ENCODE measurements at regions of chr1 and their contacts with region 1.

Region 1: GRCh38 chr1:28329395-28330153 is 734 bp downstream of the MED18 start:
- DNase-seq: peak in 2 of 4 experiments; percentile 27 to 70
- ATAC-seq: peak; percentile 74
- H3K4me3 ChIP-seq: peak overlapping the region; percentile 72
- H3K27ac ChIP-seq: peak overlapping the region; percentile 84
- H3K4me1 ChIP-seq: peaks cover 17 to 33% of the 10 kb centered on the region in 2 experiments
- H3K27me3 ChIP-seq: no peaks in the 10 kb centered on the region
- CTCF ChIP-seq: no peak
- EP300 ChIP-seq: no peak
- POLR2A ChIP-seq: no peak
- RAD21 ChIP-seq: peak in 1 of 2 experiments; percentile 7; a peak in 1 of 4 replicates

Region 2: GRCh38 chr1:28259307-28260167 is 70.0 kb before region 1 on chr1 and contains the start of gene SESN2:
- CTCF ChIA-PET with region 1: no interaction called
- POLR2A ChIA-PET with region 1: interaction called, 25 read pairs
- in situ Hi-C with region 1: no loop called
- intact Hi-C with region 1: loop called (anchors 5 kb)
- DNase-seq: peak; percentile 99 to 100 (median 100)
- ATAC-seq: peak; percentile 92
- H3K4me3 ChIP-seq: peak within 1 kb of the TSS; percentile 96
- H3K27ac ChIP-seq: peak within 1 kb of the TSS; percentile 90
- H3K4me1 ChIP-seq: peaks cover 52 to 64% of the 10 kb centered on the region in 2 experiments
- H3K27me3 ChIP-seq: no peaks in the 10 kb centered on the region
- CTCF ChIP-seq: no peak; a peak in 1 of 6 replicates
- EP300 ChIP-seq: no peak
- POLR2A ChIP-seq: peak; percentile 99
- RAD21 ChIP-seq: peak in 1 of 2 experiments; percentile 31; a peak in 1 of 4 replicates
- polyA plus RNA-seq, gene SESN2: 3.7 to 5.4 TPM

Region 3: DNA sequence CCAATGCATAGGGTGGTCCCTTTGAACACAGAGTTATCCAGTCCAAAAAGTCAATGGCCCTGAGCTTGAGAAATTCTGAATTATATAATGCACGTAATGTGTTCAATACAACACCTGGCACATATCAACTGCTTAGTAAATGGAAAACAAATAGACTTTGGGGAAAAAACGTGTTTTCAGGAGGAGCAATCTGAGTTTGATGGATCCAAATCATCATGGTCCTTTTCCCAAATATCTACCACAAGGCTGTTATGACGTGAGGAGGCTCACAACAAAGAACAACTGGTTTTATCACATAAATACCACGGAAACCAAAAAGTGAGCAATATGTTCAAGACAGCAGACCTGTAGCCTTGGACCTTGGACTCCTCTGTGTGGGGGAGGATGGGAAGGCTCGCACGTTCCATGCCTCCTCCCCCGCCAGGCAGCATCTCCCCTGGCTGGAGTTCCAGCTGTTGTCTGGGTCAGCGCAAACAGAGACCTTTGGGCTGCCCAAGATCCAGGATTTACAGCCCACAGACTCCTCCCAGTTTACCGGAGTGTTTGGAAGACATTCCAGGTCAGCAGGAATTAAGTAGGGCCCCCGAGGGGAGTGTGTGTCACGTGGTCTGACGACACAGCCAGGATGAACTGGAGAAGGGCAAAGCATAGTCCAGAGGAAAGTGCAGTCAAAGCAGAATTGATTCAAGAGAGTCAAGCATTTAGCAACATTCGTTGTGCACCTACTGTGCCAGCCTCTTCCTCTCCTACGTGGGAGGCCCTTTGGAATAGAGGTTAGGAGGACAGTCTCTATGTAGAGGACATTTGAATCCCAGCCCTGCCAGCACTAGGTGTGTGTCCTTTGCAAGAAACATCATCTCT is 32.9 kb before region 1 on chr1:
- CTCF ChIA-PET with region 1: no interaction called
- POLR2A ChIA-PET with region 1: interaction called, 13 read pairs
- in situ Hi-C with region 1: no loop called
- intact Hi-C with region 1: no loop called
- DNase-seq: peak; percentile 34 to 71 (median 58)
- ATAC-seq: peak; percentile 83
- H3K4me3 ChIP-seq: 0 out of 2 replicates have a peak overlapping the region, but pooled peaks have one; percentile 11
- H3K27ac ChIP-seq: no peak overlapping the region; the same call in 2 of the 3 replicates
- H3K4me1 ChIP-seq: peaks cover 11 to 17% of the 10 kb centered on the region in 2 experiments
- H3K27me3 ChIP-seq: no peaks in the 10 kb centered on the region
- CTCF ChIP-seq: no peak
- EP300 ChIP-seq: no peak
- POLR2A ChIP-seq: no peak
- RAD21 ChIP-seq: no peak

Region 4: DNA sequence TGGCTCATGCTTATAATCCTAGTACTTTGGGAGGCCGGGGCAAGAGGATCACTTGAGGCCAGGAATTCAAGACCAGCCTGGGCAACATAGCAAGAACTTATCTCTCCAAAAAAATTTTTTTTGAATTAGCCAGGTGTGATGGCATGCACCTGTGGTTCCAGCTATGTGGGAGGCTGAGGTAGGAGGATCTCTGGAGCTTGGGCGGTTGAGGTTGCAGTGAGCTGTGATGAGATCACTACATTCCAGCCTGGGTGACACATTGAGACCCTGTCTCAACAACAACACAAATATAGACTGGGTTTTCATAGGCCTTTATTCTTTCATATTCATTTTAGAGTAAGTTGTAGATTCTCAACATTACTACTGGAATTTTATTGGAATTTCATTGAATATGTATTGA is 12.0 kb after region 1 on chr1:
- CTCF ChIA-PET with region 1: no interaction called
- POLR2A ChIA-PET with region 1: interaction called, 72 read pairs
- in situ Hi-C with region 1: no loop called
- intact Hi-C with region 1: no loop called
- DNase-seq: no peak
- ATAC-seq: no peak
- H3K4me3 ChIP-seq: no peak overlapping the region
- H3K27ac ChIP-seq: no peak overlapping the region
- H3K4me1 ChIP-seq: peaks cover 0 to 7% of the 10 kb centered on the region in 2 experiments; a peak in 3 of 5 replicates
- H3K27me3 ChIP-seq: no peaks in the 10 kb centered on the region
- CTCF ChIP-seq: no peak
- EP300 ChIP-seq: no peak
- POLR2A ChIP-seq: no peak
- RAD21 ChIP-seq: no peak

Region 5: DNA sequence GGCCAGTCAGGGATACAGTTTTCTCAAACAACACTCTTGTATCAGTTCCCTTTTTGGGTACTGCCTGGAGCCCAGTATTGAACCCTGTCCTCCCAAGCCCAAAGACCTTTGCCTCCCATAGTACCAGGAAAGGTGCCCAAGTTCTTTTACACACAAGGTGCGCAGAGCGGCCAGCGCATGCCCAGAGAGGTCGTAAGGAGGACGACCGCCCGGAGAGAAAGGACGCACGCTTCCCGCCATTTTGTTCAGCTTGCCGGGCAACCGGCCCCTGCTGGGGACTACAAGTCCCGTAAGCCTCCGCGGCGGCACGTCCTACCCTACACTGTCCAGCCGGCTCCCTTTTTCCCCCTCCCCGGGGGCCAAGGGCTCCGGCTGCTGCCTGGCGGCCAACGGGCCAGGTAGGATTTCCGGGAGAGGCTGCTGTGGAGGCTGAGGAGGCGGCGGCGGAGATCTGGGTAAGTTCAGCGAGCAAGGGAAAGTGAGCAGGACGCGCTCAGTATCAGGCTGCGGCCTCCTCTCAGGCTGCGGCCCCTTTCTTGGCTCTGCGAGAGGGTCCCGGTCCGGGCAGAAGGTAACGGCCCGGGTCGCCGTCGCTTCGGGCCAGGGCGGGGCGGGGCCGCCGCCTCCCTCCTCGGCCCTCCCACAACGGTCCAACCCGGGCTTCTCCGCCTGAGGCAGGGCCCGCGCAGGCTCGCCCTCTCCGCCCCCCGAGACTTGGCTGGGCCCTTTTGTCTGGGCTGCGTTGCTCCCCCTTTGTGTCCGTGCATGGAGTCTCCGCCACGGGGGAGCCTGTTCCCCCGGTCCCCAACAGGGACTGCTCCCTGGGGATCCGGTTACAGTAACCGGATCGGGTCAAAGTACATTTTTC is 40.0 kb after region 1 on chr1 and contains the start of gene PHACTR4:
- CTCF ChIA-PET with region 1: no interaction called
- POLR2A ChIA-PET with region 1: interaction called, 17 read pairs
- in situ Hi-C with region 1: no loop called
- intact Hi-C with region 1: no loop called
- DNase-seq: peak; percentile 95 to 99 (median 97)
- ATAC-seq: peak; percentile 97
- H3K4me3 ChIP-seq: peak within 1 kb of the TSS; percentile 55
- H3K27ac ChIP-seq: peak within 1 kb of the TSS; percentile 89
- H3K4me1 ChIP-seq: peaks cover 17 to 31% of the 10 kb centered on the region in 2 experiments; a peak in 4 of 5 replicates
- H3K27me3 ChIP-seq: no peaks in the 10 kb centered on the region
- CTCF ChIP-seq: peak in 1 of 3 experiments; percentile 13; a peak in 2 of 6 replicates
- EP300 ChIP-seq: peak; percentile 34
- POLR2A ChIP-seq: peak; percentile 99
- RAD21 ChIP-seq: peak in 1 of 2 experiments; percentile 10; a peak in 2 of 4 replicates
- polyA plus RNA-seq, gene PHACTR4: 12.8 to 14.2 TPM